ENCODE measurements at regions of chr3 and their contacts with region 1.

Region 1: GRCh38 chr3:69294014-69294775 is 91.7 kb downstream of the FRMD4B start:
- DNase-seq: no peak
- ATAC-seq: no peak
- H3K4me3 ChIP-seq: no peak overlapping the region
- H3K27ac ChIP-seq: no peak overlapping the region
- H3K4me1 ChIP-seq: peaks cover 5% of the 10 kb centered on the region
- H3K27me3 ChIP-seq: no peaks in the 10 kb centered on the region

Region 2: DNA sequence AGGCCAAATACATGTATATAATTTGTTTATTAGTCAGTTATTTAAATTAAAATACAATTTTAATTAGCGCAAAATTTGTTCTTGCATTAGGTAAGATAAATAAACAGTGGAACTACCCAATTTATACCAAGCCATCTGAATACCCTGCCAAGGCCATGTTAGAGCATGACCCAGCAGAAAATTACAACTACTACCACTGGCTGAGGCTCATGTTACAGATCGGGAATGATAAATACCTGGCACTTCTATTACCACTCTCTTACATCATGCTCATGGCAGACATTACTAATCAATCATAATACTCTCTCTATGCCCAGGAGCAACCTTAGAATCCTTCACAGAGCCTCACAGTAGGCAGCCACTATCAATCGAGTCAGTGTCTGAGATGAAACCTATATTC is 150.6 kb before region 1 on chr3:
- intact Hi-C with region 1: no loop called
- DNase-seq: no peak
- ATAC-seq: no peak
- H3K4me3 ChIP-seq: no peak overlapping the region
- H3K27ac ChIP-seq: no peak overlapping the region
- H3K4me1 ChIP-seq: peaks cover 1% of the 10 kb centered on the region
- H3K27me3 ChIP-seq: no peaks in the 10 kb centered on the region

Region 3: GRCh38 chr3:69671082-69671952 is 377.1 kb after region 1 on chr3:
- intact Hi-C with region 1: loop called in 1 of 4 experiments (anchors 10 kb)
- DNase-seq: peak in 2 of 3 donors; percentile 38 to 55
- ATAC-seq: peak; percentile 53 to 67
- H3K4me3 ChIP-seq: no peak overlapping the region
- H3K27ac ChIP-seq: no peak overlapping the region
- H3K4me1 ChIP-seq: peaks cover 2% of the 10 kb centered on the region
- H3K27me3 ChIP-seq: no peaks in the 10 kb centered on the region